GM12878 (cell line): ENCODE measurements at regions of chr5 and their contacts with region 1.

Region 1: DNA sequence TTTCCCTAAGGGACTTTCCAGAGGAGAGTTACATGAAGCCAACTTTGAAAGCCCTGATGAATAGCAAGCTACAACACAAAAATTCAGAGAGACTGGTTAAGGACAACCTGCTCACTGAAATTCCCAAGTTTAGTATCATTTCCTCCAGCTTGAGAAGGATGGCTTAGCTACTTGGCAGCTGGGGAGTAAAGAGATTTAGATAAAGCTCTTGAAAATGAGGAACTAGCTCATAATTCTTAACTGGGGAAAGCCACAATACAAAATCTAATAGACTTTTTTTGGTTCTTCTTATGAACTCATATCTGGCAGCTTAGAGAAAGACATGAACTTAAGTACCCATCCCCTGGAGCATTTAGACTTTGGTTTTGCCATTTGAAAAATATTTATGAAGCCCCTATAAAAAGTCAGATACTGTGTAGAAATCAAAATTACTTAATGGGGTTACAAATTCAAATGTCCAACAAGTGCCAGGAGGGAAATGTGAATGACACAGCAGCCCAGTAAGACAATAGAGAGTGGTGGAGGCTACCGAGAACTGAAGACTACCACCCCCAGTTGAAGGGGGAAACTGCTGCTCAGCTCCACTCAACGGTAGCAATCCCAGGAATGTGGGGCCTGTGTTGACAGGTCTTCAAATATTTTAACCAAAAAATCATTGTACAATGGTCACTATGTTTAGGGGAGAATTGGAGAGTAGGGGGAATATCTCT is 79.4 kb upstream of the ADRB2 start:
- DNase-seq: no peak
- ATAC-seq: peak; percentile 90
- H3K4me3 ChIP-seq: no peak overlapping the region
- H3K27ac ChIP-seq: no peak overlapping the region
- H3K4me1 ChIP-seq: peaks cover 9% of the 10 kb centered on the region
- H3K27me3 ChIP-seq: no peaks in the 10 kb centered on the region
- CTCF ChIP-seq: no peak
- EP300 ChIP-seq: no peak
- POLR2A ChIP-seq: no peak
- RAD21 ChIP-seq: no peak

Region 2: GRCh38 chr5:148469501-148469935 is 277.5 kb before region 1 on chr5:
- CTCF ChIA-PET with region 1: no interaction called
- POLR2A ChIA-PET with region 1: no interaction called
- RAD21 ChIA-PET with region 1: no interaction called
- SMC1A ChIA-PET with region 1: no interaction called
- in situ Hi-C with region 1: no loop called
- intact Hi-C with region 1: no loop called
- DNase-seq: no peak
- ATAC-seq: no peak
- H3K4me3 ChIP-seq: no peak overlapping the region
- H3K27ac ChIP-seq: no peak overlapping the region
- H3K4me1 ChIP-seq: no peaks in the 10 kb centered on the region
- H3K27me3 ChIP-seq: no peaks in the 10 kb centered on the region
- CTCF ChIP-seq: no peak
- EP300 ChIP-seq: no peak
- POLR2A ChIP-seq: no peak
- RAD21 ChIP-seq: no peak

Region 3: GRCh38 chr5:148760945-148761638 is 14.1 kb after region 1 on chr5:
- CTCF ChIA-PET with region 1: interaction called, 12 read pairs
- POLR2A ChIA-PET with region 1: no interaction called
- RAD21 ChIA-PET with region 1: interaction called, 6 read pairs
- SMC1A ChIA-PET with region 1: interaction called, 14 read pairs
- in situ Hi-C with region 1: no loop called
- intact Hi-C with region 1: no loop called
- DNase-seq: peak; percentile 59
- ATAC-seq: peak; percentile 100
- H3K4me3 ChIP-seq: no peak overlapping the region
- H3K27ac ChIP-seq: no peak overlapping the region
- H3K4me1 ChIP-seq: peaks cover 8% of the 10 kb centered on the region
- H3K27me3 ChIP-seq: no peaks in the 10 kb centered on the region
- CTCF ChIP-seq: no peak
- EP300 ChIP-seq: no peak
- POLR2A ChIP-seq: no peak
- RAD21 ChIP-seq: no peak